CD4-positive, alpha-beta memory T cell (primary cell): ENCODE measurements at regions of chr2 and their contacts with region 1.

Region 1: DNA sequence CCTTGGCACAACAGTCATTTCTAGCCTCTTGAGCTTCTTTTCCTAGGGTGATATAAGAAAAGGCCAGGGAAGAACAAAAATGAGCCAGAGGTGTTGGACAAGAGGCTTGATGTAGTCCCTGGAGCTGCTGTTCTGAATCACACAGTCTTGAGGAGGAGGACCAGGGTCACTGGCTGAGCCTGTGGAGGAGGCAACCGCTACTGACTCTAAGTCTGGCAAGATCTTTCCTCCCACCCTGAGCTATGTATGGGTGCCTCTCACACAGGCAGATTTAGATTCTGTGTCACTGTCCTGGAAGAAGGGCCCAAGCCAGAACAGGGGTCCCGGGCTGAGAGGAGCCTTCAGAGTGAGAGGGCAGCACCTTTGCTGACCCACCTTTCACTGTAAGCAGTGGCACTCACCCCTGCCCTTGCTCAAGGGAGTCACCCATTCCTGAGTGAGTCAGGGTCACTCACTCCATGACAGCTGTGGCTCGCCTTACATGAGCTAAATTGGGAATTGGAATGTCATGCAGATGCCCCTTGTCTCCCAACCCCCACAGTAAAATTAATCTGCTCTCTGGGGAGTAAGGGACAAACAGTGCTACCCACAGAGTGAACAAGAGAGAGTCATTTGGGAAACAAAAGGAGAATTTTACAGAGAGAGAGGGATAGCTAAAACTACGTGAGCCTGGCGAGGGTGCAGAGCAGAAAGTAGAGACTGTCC is at the start of gene TRIM54:
- DNase-seq: no peak
- H3K4me3 ChIP-seq: no peak within 1 kb of the TSS
- H3K4me3 Mint-ChIP-seq: no peak within 1 kb of the TSS
- H3K27ac ChIP-seq: no peak within 1 kb of the TSS
- H3K27ac Mint-ChIP-seq: peak within 1 kb of the TSS in 1 of 7 donors; percentile 62
- H3K4me1 ChIP-seq: no peaks in the 10 kb centered on the region
- H3K4me1 Mint-ChIP-seq: peaks cover 0 to 4% (median 1%) of the 10 kb centered on the region in 4 donors
- H3K27me3 ChIP-seq: peaks cover 6% of the 10 kb centered on the region
- H3K27me3 Mint-ChIP-seq: peaks cover 11 to 25% of the 10 kb centered on the region in 2 donors
- total RNA-seq, gene TRIM54: 0.17 TPM in 1 of 2 experiments, not detected in the other

Region 2: DNA sequence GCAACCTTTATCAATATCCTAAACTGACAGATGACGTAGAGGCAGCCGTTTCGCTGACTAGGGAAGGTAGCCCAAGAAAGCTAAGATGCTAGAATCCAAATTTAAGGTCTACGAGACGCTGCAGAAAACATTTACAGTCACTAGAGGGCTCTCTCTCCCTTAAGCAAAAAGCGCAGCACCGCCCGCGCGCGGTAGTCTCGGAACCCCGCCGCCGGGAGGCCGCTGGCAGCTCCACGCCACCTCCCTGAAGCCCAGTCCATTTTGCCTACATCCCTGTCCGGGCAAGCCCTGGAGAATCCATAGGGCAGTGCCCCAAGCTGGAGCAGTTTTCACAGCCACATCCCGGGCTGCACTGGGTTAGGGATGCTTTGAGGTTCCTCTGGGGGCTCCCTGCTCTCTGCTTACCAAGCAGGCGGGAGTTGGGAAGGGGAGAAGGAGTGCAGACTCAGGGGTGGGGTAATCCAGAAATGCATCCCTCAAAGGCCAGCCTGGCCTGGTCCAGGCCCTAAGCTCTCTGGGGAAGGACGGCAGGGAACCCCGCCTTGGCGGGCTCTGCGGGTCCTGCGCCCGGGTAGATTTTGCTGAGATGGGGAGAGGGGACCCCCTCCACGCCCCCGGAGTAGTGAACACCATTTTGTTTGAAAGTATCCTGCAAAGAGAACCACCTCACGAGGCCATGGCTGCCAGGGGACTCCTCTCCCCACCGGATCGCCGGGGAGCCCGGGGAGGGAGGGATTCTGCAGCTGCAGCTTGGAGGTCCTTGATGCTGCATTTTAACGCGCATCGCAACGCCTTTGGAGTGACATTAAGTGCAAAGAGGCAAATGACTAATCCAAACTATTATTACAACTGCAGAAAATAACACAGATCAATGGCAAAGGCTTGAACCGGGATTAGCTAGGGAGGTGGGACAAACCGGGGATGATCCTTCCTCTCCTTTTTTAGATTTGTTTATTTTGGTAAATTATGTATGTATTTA is 435.4 kb before region 1 on chr2:
- CTCF ChIA-PET with region 1: interaction called, 7 read pairs
- POLR2A ChIA-PET with region 1: no interaction called
- intact Hi-C with region 1: loop called (anchors 1 kb)
- DNase-seq: peak in 4 of 5 donors; percentile 49 to 59 (median 55)
- H3K4me3 ChIP-seq: no peak overlapping the region
- H3K4me3 Mint-ChIP-seq: peak overlapping the region; percentile 70 to 92 (median 78)
- H3K27ac ChIP-seq: no peak overlapping the region
- H3K27ac Mint-ChIP-seq: peak overlapping the region in 2 of 7 donors; percentile 16 to 73
- H3K4me1 ChIP-seq: peaks cover 38% of the 10 kb centered on the region
- H3K4me1 Mint-ChIP-seq: peaks cover 2 to 27% (median 8%) of the 10 kb centered on the region in 4 donors
- H3K27me3 ChIP-seq: peaks cover 43% of the 10 kb centered on the region
- H3K27me3 Mint-ChIP-seq: peaks cover 29 to 34% of the 10 kb centered on the region in 2 donors

Region 3: DNA sequence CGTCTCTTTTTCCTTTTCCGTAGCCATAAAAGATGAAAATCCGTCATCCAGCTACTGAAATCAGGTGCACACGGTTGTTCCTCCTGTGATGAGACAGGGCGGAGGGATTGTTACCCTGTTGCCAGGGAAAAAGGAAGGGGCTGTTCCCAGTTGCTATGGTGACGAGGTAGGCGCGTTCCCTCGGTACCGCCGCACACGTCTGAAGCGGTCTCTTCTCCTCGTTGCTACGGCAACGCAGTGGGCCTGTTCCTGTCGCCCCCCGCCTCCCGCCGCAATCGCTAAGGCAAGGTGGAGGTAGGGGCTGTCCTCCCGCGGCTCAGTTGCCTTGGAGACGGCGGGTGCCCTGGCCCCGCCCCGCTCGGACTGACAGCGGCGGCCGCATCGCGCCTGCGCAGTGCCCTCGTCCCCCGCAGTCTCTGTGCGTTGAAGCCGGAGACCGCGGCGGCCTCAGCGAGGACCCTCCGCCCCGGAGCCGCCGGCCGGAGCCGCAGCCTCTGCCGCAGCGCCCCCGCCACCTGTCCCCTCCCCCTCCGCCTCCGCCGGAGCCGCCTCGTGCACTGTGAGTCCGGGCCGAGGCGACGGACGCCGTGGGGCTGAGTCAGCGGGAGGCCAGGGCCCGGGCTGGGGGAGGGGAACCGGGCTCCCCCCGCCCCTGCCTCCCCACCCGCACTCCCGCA is 311.6 kb before region 1 on chr2 and contains the start of gene MAPRE3:
- CTCF ChIA-PET with region 1: interaction called, 125 read pairs
- POLR2A ChIA-PET with region 1: no interaction called
- intact Hi-C with region 1: no loop called
- DNase-seq: peak; percentile 81 to 93 (median 85)
- H3K4me3 ChIP-seq: peak within 1 kb of the TSS; percentile 66 to 76
- H3K4me3 Mint-ChIP-seq: peak within 1 kb of the TSS; percentile 82 to 90 (median 85)
- H3K27ac ChIP-seq: peak within 1 kb of the TSS; percentile 44
- H3K27ac Mint-ChIP-seq: peak within 1 kb of the TSS; percentile 75 to 96 (median 92)
- H3K4me1 ChIP-seq: peaks cover 15% of the 10 kb centered on the region
- H3K4me1 Mint-ChIP-seq: peaks cover 12 to 30% (median 18%) of the 10 kb centered on the region in 4 donors
- H3K27me3 ChIP-seq: no peaks in the 10 kb centered on the region
- H3K27me3 Mint-ChIP-seq: peaks cover 5 to 11% of the 10 kb centered on the region in 2 donors
- total RNA-seq, gene MAPRE3: 3.4 to 3.6 TPM

Region 4: GRCh38 chr2:27174316-27175040 is 107.5 kb before region 1 on chr2:
- CTCF ChIA-PET with region 1: interaction called, 19 read pairs
- POLR2A ChIA-PET with region 1: no interaction called
- intact Hi-C with region 1: loop called (anchors 1 kb)
- DNase-seq: no peak
- H3K4me3 ChIP-seq: no peak overlapping the region
- H3K4me3 Mint-ChIP-seq: no peak overlapping the region
- H3K27ac ChIP-seq: no peak overlapping the region
- H3K27ac Mint-ChIP-seq: no peak overlapping the region
- H3K4me1 ChIP-seq: no peaks in the 10 kb centered on the region
- H3K4me1 Mint-ChIP-seq: peaks cover 4 to 6% (median 6%) of the 10 kb centered on the region in 4 donors
- H3K27me3 ChIP-seq: no peaks in the 10 kb centered on the region
- H3K27me3 Mint-ChIP-seq: peaks cover 24 to 28% of the 10 kb centered on the region in 2 donors

Region 5: GRCh38 chr2:27264753-27265535 is 17.1 kb before region 1 on chr2:
- CTCF ChIA-PET with region 1: interaction called, 43 read pairs
- POLR2A ChIA-PET with region 1: interaction called, 4 read pairs
- intact Hi-C with region 1: loop called (anchors 1 kb)
- DNase-seq: peak; percentile 39 to 73 (median 50)
- H3K4me3 ChIP-seq: peak overlapping the region in 1 of 2 donors; percentile 47
- H3K4me3 Mint-ChIP-seq: peak overlapping the region; percentile 70 to 94 (median 83)
- H3K27ac ChIP-seq: no peak overlapping the region
- H3K27ac Mint-ChIP-seq: peak overlapping the region in 3 of 7 donors; percentile 21 to 54 (median 52)
- H3K4me1 ChIP-seq: peaks cover 23% of the 10 kb centered on the region
- H3K4me1 Mint-ChIP-seq: peaks cover 23 to 38% (median 25%) of the 10 kb centered on the region in 4 donors
- H3K27me3 ChIP-seq: peaks cover 31% of the 10 kb centered on the region
- H3K27me3 Mint-ChIP-seq: peaks cover 35 to 38% of the 10 kb centered on the region in 2 donors

Region 6: GRCh38 chr2:27683390-27684071 is 401.5 kb after region 1 on chr2:
- CTCF ChIA-PET with region 1: no interaction called
- POLR2A ChIA-PET with region 1: no interaction called
- intact Hi-C with region 1: no loop called
- DNase-seq: peak; percentile 84 to 87 (median 86)
- H3K4me3 ChIP-seq: no peak overlapping the region
- H3K4me3 Mint-ChIP-seq: peak overlapping the region in 1 of 8 donors; percentile 36
- H3K27ac ChIP-seq: no peak overlapping the region
- H3K27ac Mint-ChIP-seq: peak overlapping the region; percentile 62 to 93 (median 88)
- H3K4me1 ChIP-seq: peaks cover 26% of the 10 kb centered on the region
- H3K4me1 Mint-ChIP-seq: peaks cover 12 to 21% (median 16%) of the 10 kb centered on the region in 4 donors
- H3K27me3 ChIP-seq: no peaks in the 10 kb centered on the region
- H3K27me3 Mint-ChIP-seq: no peaks in the 10 kb centered on the region